ENCODE measurements at regions of chr17 and their contacts with region 1.

Region 1: DNA sequence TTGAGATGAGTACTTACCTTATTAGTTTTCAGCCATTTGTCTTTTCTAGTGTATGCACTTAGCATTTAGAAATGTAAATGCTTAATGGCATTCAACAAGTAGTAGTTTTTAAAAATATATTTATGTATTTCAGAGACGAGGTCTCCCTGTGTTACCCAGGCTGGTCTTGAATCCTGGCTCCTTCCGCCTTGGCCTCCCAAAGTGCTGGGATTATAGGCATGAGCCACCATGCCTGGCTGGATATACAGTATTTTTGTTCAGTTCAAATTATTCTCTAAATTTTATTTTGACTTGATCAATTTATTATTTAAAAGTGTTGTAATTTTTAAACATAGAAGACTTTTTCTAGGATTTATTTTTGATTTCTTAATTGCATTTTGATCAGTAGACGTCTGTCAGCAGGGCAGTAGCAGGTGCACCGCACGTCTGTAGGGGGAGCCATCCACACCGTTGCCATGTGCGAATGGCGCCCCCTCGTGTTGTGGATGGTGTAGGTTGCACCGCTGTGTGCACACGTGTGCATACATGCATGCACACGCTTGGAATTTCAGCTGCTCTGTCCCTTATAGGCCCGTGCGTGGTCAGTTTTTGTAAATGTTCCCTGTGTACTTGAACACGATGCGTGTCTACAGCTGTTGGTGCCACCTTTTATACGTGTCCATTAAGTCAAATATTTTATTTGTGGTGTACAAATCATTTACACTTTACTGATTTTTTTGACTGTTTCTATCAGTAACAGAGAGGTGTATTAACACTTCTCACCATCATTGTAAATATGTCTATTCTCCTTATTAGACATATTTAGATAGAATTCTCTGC is 30.6 kb downstream of the RPTOR start:
- DNase-seq: peak; percentile 80 to 94 (median 92)
- ATAC-seq: peak; percentile 100
- H3K4me3 ChIP-seq: no peak overlapping the region
- H3K4me3 Mint-ChIP-seq: no peak overlapping the region
- H3K27ac ChIP-seq: no peak overlapping the region
- H3K27ac Mint-ChIP-seq: no peak overlapping the region
- H3K4me1 ChIP-seq: no peaks in the 10 kb centered on the region
- H3K4me1 Mint-ChIP-seq: peaks cover 9% of the 10 kb centered on the region
- H3K27me3 ChIP-seq: no peaks in the 10 kb centered on the region
- H3K27me3 Mint-ChIP-seq: no peaks in the 10 kb centered on the region
- CTCF ChIP-seq: peak; percentile 100

Region 2: DNA sequence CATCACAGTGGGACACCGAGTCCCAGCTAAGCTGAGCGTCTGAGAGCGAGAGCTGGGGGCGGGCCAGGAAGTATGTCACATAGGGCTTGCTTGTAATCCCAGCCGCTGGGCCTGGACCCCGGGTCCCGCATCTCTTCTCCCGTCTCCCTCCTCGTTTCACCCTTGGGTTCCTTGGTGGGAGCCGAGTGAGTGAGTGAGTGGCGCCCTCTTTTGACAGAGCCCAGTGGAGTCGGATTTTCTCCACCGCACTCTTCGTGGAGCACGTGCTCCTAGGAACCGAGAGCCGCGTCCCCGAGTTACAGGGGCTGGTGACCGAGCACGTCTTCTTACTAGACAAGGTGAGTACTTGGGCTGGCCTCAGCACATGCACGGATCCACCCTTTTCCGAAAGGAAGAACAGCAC is 211.0 kb before region 1 on chr17:
- CTCF ChIA-PET with region 1: no interaction called
- POLR2A ChIA-PET with region 1: no interaction called
- intact Hi-C with region 1: no loop called
- DNase-seq: peak in 1 of 9 experiments; percentile 23
- ATAC-seq: no peak
- H3K4me3 ChIP-seq: no peak overlapping the region
- H3K4me3 Mint-ChIP-seq: no peak overlapping the region
- H3K27ac ChIP-seq: no peak overlapping the region
- H3K27ac Mint-ChIP-seq: no peak overlapping the region
- H3K4me1 ChIP-seq: no peaks in the 10 kb centered on the region
- H3K4me1 Mint-ChIP-seq: no peaks in the 10 kb centered on the region
- H3K27me3 ChIP-seq: no peaks in the 10 kb centered on the region
- H3K27me3 Mint-ChIP-seq: no peaks in the 10 kb centered on the region
- CTCF ChIP-seq: no peak

Region 3: DNA sequence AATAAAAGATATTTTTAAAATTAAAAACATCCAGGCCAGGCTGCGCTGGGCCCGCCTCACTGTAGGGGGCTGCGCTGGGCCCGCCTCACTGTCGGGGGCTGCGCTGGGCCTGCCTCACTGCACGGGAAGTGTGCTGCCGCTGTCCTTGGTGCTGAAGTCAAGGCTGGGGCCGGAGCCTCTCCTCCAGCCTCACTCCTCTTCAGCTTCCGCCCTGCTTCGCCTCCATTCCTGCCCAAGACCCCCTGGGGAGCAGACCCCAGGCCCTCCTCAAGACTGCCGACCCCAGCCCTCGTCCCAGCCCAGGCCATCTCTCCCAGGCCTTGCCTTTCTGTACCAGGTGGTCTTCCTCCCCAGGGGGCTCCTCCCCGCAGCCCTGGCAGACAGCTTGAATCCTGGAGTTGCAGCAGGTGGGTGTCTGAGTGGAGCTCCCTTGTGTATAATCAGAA is 134.1 kb before region 1 on chr17:
- CTCF ChIA-PET with region 1: no interaction called
- POLR2A ChIA-PET with region 1: no interaction called
- intact Hi-C with region 1: no loop called
- DNase-seq: peak; percentile 22 to 73 (median 58)
- ATAC-seq: peak; percentile 89
- H3K4me3 ChIP-seq: no peak overlapping the region
- H3K4me3 Mint-ChIP-seq: no peak overlapping the region
- H3K27ac ChIP-seq: no peak overlapping the region
- H3K27ac Mint-ChIP-seq: no peak overlapping the region
- H3K4me1 ChIP-seq: no peaks in the 10 kb centered on the region
- H3K4me1 Mint-ChIP-seq: no peaks in the 10 kb centered on the region
- H3K27me3 ChIP-seq: no peaks in the 10 kb centered on the region
- H3K27me3 Mint-ChIP-seq: peaks cover 14% of the 10 kb centered on the region
- CTCF ChIP-seq: no peak

Region 4: DNA sequence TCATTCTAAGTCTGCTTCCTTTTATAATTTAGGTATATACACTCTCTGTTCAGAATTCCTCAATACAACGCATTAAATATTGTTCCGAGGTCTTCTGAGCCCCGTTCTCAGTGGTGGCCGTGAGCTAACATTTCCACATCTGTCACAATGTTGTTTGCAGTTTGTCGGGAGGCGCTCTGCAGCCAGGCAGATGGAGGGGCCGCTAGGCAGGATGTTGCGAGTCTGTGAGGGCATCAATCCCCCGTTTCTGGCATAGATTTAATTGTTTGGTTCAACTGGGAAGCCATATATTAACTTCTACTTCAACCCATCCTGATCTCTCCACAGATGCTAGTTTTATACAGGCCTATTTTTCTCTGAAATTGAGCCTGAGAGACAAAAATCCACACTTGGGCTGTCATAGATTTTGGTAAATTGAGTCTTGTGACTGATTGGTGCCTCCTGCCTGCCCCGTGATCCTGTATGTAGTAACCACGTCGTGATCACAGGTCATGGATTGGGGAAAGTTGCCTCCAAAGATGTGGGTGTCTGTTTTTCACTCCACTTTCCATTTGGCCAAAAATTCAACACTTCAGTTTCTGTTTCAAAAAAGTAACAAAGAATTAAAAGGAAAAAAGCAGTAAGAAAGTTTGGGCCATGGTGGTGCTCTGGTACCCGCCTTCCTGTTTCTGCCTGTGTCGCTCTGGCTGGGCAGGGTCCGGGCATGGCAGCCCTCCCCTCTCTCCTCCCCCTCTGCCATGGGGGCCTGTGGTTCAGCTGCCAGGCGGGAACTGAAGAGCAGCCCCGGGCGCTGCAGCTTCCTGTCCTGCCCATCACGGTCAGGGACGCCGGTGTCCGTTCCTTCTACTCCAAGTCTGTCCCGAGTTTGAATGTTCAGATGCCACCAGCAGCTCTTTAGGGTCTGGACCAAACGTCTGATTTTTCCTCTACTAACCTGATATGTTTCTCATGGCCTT is 10.9 kb after region 1 on chr17:
- CTCF ChIA-PET with region 1: interaction called, 16 read pairs
- POLR2A ChIA-PET with region 1: no interaction called
- intact Hi-C with region 1: no loop called
- DNase-seq: no peak
- ATAC-seq: no peak
- H3K4me3 ChIP-seq: no peak overlapping the region
- H3K4me3 Mint-ChIP-seq: peak overlapping the region; percentile 42
- H3K27ac ChIP-seq: no peak overlapping the region
- H3K27ac Mint-ChIP-seq: peak overlapping the region; percentile 66
- H3K4me1 ChIP-seq: peaks cover 15% of the 10 kb centered on the region
- H3K4me1 Mint-ChIP-seq: peaks cover 45% of the 10 kb centered on the region
- H3K27me3 ChIP-seq: no peaks in the 10 kb centered on the region
- H3K27me3 Mint-ChIP-seq: no peaks in the 10 kb centered on the region
- CTCF ChIP-seq: no peak

Region 5: GRCh38 chr17:80663781-80664206 is 88.5 kb after region 1 on chr17:
- CTCF ChIA-PET with region 1: no interaction called
- POLR2A ChIA-PET with region 1: no interaction called
- intact Hi-C with region 1: no loop called
- DNase-seq: peak in 8 of 9 experiments; percentile 9 to 71 (median 48)
- ATAC-seq: peak; percentile 60
- H3K4me3 ChIP-seq: peak overlapping the region in 1 of 2 experiments; percentile 50
- H3K4me3 Mint-ChIP-seq: peak overlapping the region; percentile 64
- H3K27ac ChIP-seq: peak overlapping the region; percentile 28 to 71
- H3K27ac Mint-ChIP-seq: peak overlapping the region; percentile 98
- H3K4me1 ChIP-seq: peaks cover 56% of the 10 kb centered on the region
- H3K4me1 Mint-ChIP-seq: peaks cover 69% of the 10 kb centered on the region
- H3K27me3 ChIP-seq: no peaks in the 10 kb centered on the region
- H3K27me3 Mint-ChIP-seq: no peaks in the 10 kb centered on the region
- CTCF ChIP-seq: no peak

Region 6: DNA sequence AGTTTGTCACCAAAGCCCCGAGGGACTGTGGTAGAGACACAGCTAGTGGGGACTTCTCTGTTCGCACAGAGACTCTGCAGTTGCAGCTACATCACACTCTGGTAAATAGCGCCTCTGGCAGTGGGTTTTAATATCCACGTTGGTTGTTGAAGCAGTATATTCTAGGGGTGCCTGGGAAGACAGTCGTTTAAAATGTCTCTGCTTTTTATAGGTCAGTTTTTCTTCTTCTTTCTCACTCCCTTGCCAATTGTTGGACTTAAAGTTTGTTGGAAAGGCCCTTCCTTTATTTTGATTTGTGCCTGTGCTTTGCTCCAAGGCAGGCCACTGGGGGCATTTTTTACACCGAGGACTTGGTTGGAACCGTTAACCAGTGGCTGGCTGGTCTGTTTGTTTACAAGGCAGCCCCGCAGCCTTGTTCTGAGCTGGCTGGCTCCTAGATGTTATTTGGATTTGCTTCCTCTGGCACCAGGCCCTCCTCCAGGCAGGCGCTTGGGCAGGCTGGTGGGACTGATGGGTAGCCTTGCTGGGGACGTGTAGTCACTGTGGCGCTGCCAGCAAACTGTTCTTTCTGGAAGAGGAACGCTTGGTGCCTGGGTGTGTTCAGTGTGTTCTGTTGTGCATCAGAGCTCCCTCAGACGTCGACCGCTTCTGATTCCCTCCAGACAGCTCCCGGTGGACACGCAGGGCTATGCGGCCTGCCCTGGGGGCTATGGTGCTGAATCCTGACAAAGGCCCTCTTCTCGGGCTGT is 198.2 kb after region 1 on chr17:
- CTCF ChIA-PET with region 1: interaction called, 6 read pairs
- POLR2A ChIA-PET with region 1: no interaction called
- intact Hi-C with region 1: loop called in 1 of 2 experiments (anchors 5 kb)
- DNase-seq: peak in 2 of 9 experiments; percentile 56 to 59
- ATAC-seq: peak; percentile 81
- H3K4me3 ChIP-seq: no peak overlapping the region
- H3K4me3 Mint-ChIP-seq: peak overlapping the region; percentile 75
- H3K27ac ChIP-seq: no peak overlapping the region
- H3K27ac Mint-ChIP-seq: peak overlapping the region; percentile 95
- H3K4me1 ChIP-seq: peaks cover 31% of the 10 kb centered on the region
- H3K4me1 Mint-ChIP-seq: peaks cover 61% of the 10 kb centered on the region
- H3K27me3 ChIP-seq: no peaks in the 10 kb centered on the region
- H3K27me3 Mint-ChIP-seq: no peaks in the 10 kb centered on the region
- CTCF ChIP-seq: no peak

Region 7: GRCh38 chr17:80899402-80900268 is 324.4 kb after region 1 on chr17:
- CTCF ChIA-PET with region 1: interaction called, 4 read pairs
- POLR2A ChIA-PET with region 1: no interaction called
- intact Hi-C with region 1: loop called (anchors 1 kb)
- DNase-seq: peak; percentile 58 to 84 (median 78)
- ATAC-seq: peak; percentile 88
- H3K4me3 ChIP-seq: no peak overlapping the region
- H3K4me3 Mint-ChIP-seq: no peak overlapping the region
- H3K27ac ChIP-seq: no peak overlapping the region
- H3K27ac Mint-ChIP-seq: no peak overlapping the region
- H3K4me1 ChIP-seq: peaks cover 5% of the 10 kb centered on the region
- H3K4me1 Mint-ChIP-seq: peaks cover 24% of the 10 kb centered on the region
- H3K27me3 ChIP-seq: no peaks in the 10 kb centered on the region
- H3K27me3 Mint-ChIP-seq: no peaks in the 10 kb centered on the region
- CTCF ChIP-seq: peak; percentile 97

Region 8: GRCh38 chr17:80981062-80981902 is 406.0 kb after region 1 on chr17:
- CTCF ChIA-PET with region 1: interaction called, 4 read pairs
- POLR2A ChIA-PET with region 1: no interaction called
- intact Hi-C with region 1: loop called in 1 of 2 experiments (anchors 5 kb)
- DNase-seq: peak in 6 of 9 experiments; percentile 25 to 66 (median 56)
- ATAC-seq: peak; percentile 74
- H3K4me3 ChIP-seq: no peak overlapping the region
- H3K4me3 Mint-ChIP-seq: no peak overlapping the region
- H3K27ac ChIP-seq: no peak overlapping the region
- H3K27ac Mint-ChIP-seq: no peak overlapping the region
- H3K4me1 ChIP-seq: peaks cover 6% of the 10 kb centered on the region
- H3K4me1 Mint-ChIP-seq: peaks cover 7% of the 10 kb centered on the region
- H3K27me3 ChIP-seq: peaks cover 2 to 5% of the 10 kb centered on the region in 2 experiments
- H3K27me3 Mint-ChIP-seq: peaks cover 23% of the 10 kb centered on the region
- CTCF ChIP-seq: peak; percentile 88